GM13976 (cell line): ENCODE measurements at regions of chr5 and their contacts with region 1.

Region 1: DNA sequence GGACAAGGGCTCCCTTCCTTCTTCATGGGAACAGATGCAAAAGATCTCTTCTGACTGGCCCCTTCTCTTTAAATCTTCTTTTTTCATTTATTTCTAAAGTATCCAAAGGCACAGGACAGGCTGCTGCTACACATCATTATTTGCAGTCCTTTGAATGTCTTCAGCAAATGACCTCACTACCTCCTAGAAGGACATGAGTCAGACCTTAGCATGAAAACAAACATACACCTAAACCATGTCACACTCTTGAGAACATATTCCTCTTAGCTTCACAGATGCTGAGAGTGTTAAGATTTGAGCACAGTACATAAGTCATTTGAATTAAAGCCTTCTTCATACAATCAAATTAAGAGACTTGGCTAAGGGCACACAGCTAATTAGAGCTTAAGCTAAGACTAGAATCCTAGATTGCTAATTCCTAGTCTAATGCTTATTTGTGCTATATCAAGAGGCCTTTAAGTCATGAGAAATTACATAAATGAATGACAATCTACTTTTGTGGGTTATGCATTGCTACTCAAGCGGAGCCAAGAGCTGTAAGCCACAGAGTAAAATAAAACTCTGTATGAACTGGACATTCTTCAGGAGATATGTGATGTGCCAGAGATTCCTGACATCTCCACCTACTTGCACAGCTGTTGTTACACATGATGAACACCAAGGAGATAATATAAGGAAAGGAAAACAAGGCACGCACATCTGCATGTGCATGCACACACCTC is 109.1 kb upstream of the PTGER4 start:
- DNase-seq: no peak
- CTCF ChIP-seq: no peak

Region 2: GRCh38 chr5:40078896-40079575 is 491.5 kb before region 1 on chr5:
- in situ Hi-C with region 1: no loop called
- DNase-seq: no peak
- CTCF ChIP-seq: no peak

Region 3: GRCh38 chr5:40486437-40487275 is 83.9 kb before region 1 on chr5:
- in situ Hi-C with region 1: loop called (anchors 10 kb)
- DNase-seq: no peak
- CTCF ChIP-seq: no peak